ENCODE measurements at regions of chr17 and their contacts with region 1.

Region 1: GRCh38 chr17:42287926-42288802 is at the start of gene STAT5A:
- DNase-seq: peak; percentile 88
- H3K4me3 ChIP-seq: peak within 1 kb of the TSS; percentile 23 to 59 (median 30)
- H3K27ac ChIP-seq: peak within 1 kb of the TSS; percentile 42
- H3K4me1 ChIP-seq: peaks cover 14% of the 10 kb centered on the region
- H3K27me3 ChIP-seq: no peaks in the 10 kb centered on the region
- CTCF ChIP-seq: no peak
- POLR2A ChIP-seq: peak; percentile 59
- total RNA-seq, gene STAT5A: 23.4 and 23.6 TPM in 2 replicates

Region 2: DNA sequence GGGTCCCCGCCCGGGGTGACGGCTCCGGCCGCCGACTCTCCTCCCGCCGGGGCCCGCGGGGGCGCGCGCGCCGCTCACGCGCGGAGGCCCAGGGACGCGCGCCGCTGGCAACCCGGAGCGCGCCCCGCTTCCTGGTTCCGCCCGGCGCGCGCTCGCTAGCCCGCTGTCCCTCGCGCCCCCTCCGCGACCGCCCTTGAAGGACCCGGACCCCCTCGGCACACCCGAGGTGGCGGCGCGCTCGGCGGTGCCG is 11.9 kb before region 1 on chr17 and contains the start of gene STAT5B:
- CTCF ChIA-PET with region 1: interaction called, 11 read pairs
- POLR2A ChIA-PET with region 1: no interaction called
- dilution Hi-C with region 1: no loop called
- intact Hi-C with region 1: no loop called
- DNase-seq: peak; percentile 46
- H3K4me3 ChIP-seq: peak within 1 kb of the TSS; percentile 65 to 96 (median 79)
- H3K27ac ChIP-seq: peak within 1 kb of the TSS; percentile 59
- H3K4me1 ChIP-seq: peaks cover 16% of the 10 kb centered on the region
- H3K27me3 ChIP-seq: no peaks in the 10 kb centered on the region
- CTCF ChIP-seq: no peak
- POLR2A ChIP-seq: no peak
- total RNA-seq, gene STAT5B: 53.1 and 53.7 TPM in 2 replicates

Measured in endothelial cell of umbilical vein (primary cell).